ENCODE measurements at regions of chr4 and their contacts with region 1.

Region 1: GRCh38 chr4:176277162-176277904 is 8.3 kb upstream of the ASB5 start:
- DNase-seq: no peak
- H3K4me3 ChIP-seq: no peak overlapping the region
- CTCF ChIP-seq: peak; percentile 69

Region 2: DNA sequence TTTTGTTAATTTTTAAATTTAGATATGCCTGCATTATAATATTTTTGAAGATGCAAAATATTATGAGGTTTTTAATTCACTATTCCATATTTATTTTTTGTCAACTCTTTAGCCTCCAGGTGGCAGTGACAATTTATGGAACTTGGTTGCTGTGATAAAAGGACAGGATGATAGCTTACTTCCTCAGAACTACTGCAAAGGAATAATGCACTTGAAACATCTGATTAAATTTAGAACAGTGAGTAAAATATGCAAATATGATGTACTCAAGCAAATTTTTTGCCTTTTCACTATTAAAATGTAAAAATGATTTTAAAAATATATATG is 127.0 kb before region 1 on chr4:
- CTCF ChIA-PET with region 1: interaction called, 26 read pairs
- POLR2A ChIA-PET with region 1: no interaction called
- DNase-seq: no peak
- H3K4me3 ChIP-seq: no peak overlapping the region
- CTCF ChIP-seq: peak; percentile 5

Region 3: DNA sequence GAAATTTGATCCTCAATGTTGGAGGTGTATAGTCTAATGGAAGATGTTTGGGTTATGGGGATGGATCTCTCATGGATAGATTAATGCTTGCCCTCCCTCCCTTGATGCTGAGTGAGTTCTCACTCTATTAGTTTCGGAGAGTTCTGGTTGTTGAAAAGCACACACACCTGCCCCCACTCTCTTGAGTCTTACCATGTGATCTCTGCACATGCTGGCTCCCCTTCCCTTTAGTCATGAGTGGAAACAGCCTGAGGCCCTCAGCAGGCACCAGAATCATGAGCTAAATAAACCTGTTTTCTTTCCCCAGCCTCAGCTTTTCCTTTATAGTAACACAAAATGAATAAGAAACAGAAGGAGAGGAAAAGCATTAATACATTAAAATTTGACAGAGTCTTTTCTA is 14.4 kb before region 1 on chr4:
- CTCF ChIA-PET with region 1: interaction called, 19 read pairs
- POLR2A ChIA-PET with region 1: no interaction called
- DNase-seq: no peak
- H3K4me3 ChIP-seq: no peak overlapping the region
- CTCF ChIP-seq: no peak

Region 4: DNA sequence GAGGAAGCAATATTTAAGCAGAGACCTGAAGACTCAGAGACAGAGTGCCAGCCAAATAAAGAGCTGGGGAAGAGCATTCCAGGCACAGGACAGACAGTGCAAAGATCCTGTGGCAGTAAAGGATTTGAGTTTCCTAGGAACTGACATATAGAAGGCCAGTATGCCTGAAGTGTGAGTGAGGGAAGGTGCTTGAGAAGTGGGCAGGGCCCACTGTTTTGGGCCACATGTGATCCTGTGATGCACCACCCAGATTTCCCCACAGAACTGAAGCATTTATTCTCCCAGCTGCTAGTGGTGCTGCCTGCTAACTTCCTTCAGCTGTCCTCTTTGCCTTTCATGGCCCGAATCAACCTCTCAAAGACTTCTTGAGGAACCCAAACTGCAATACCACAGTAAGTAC is 15.6 kb after region 1 on chr4:
- CTCF ChIA-PET with region 1: interaction called, 49 read pairs
- POLR2A ChIA-PET with region 1: no interaction called
- DNase-seq: no peak
- H3K4me3 ChIP-seq: no peak overlapping the region
- CTCF ChIP-seq: no peak

Measured in AG04449 (cell line).